GM13976 (cell line): ENCODE measurements at regions of chr2 and their contacts with region 1.

Region 1: DNA sequence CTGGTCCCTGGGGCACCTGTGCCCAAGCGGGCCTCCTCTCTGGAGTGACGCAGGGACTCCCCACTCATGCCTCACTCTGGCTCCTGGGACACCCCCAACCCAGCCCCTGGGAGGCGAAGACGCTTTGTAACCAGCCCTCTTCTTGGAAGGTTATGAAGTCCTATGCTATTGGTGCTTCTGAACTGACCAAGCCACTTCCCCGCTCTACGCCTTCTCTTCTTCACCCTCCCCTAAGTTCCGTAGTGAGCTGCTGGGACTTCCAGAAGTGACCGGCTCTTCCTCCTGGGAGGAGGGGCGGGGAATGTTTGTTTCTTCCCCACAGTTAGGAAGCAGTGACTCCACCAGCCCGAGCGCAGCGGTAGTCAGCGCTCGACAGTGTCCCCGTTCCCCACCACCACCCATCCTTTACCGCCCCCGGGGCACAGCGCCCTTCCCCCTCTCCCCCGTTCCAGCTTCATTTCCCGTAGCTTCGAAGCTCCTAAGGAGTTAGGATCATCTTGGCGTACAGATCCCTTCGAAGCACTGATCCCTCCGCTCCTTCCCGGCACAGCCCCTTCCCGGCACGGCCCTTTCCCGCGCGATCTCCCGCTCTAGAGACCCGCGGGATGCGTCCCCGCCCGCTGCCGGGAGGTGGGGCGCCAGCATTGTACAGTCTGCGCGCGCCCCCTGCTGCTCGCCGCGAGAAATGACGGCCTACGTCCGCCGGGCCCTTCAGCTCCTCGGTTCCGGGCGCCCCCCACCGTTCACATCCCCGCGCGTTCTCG is 25.3 kb upstream of the NOTO start:
- DNase-seq: peak; percentile 96
- CTCF ChIP-seq: peak; percentile 100

Region 2: GRCh38 chr2:72887754-72888437 is 289.2 kb before region 1 on chr2:
- in situ Hi-C with region 1: loop called (anchors 25 kb)
- DNase-seq: peak; percentile 75
- CTCF ChIP-seq: peak; percentile 73